CD14-positive monocyte (primary cell): ENCODE measurements at regions of chr17 and their contacts with region 1.

Region 1: DNA sequence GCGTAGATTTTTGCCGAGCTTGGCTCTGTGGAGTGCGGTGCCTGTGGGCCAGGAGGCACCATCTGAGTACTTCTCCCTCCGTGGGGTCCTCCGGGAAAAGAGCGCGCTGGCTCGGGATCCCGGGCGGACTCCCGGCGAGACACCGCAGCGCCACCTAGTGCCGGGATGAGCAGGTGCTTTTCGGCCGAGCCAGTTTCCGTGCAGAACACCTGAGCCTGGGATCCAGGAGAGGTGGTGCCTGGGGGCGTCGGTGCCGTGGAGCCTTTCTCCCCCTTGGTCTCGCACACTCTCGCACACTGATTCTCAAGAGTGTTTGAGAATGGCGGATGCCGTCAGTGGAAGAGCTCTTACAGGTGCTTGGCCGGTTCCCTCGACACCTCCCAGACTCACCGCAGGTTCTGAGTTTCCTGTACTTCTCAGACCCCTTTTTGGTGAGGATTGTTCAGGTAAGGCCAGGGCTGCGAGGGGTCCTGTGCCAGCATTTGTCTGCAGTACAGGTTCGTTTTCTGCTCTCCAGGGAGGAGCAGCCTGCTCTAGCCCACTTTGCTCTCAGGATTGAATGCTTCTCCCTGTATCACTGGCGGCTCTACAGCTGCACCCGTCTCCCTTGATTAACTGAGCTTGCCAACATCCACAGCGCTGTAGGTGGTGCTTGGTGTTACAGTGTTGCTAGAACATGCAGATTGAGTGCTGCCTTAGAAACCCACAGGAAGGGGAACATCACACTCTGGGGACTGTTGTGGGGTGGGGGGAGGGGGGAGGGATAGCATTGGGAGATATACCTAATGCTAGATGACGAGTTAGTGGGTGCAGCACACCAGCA is 23.3 kb downstream of the TBCD start:
- DNase-seq: peak in 2 of 3 donors; percentile 24 to 39
- H3K4me3 ChIP-seq: no peak overlapping the region
- H3K4me3 Mint-ChIP-seq: no peak overlapping the region
- H3K27ac ChIP-seq: no peak overlapping the region
- H3K27ac Mint-ChIP-seq: peak overlapping the region in 1 of 7 donors; percentile 25
- H3K4me1 ChIP-seq: peaks cover 0 to 5% of the 10 kb centered on the region in 2 donors
- H3K4me1 Mint-ChIP-seq: peaks cover 7% of the 10 kb centered on the region
- H3K27me3 ChIP-seq: no peaks in the 10 kb centered on the region
- H3K27me3 Mint-ChIP-seq: peaks cover 0 to 5% (median 0%) of the 10 kb centered on the region in 3 donors
- CTCF ChIP-seq: peak; percentile 89

Region 2: GRCh38 chr17:82351716-82352488 is 423.3 kb before region 1 on chr17:
- intact Hi-C with region 1: loop called in 1 of 2 experiments (anchors 10 kb)
- DNase-seq: peak; percentile 77 to 82 (median 80)
- H3K4me3 ChIP-seq: no peak overlapping the region
- H3K4me3 Mint-ChIP-seq: no peak overlapping the region
- H3K27ac ChIP-seq: no peak overlapping the region
- H3K27ac Mint-ChIP-seq: peak overlapping the region in 1 of 7 donors; percentile 48
- H3K4me1 ChIP-seq: peaks cover 1 to 3% of the 10 kb centered on the region in 2 donors
- H3K4me1 Mint-ChIP-seq: peaks cover 3% of the 10 kb centered on the region
- H3K27me3 ChIP-seq: peaks cover 0 to 2% of the 10 kb centered on the region in 2 donors
- H3K27me3 Mint-ChIP-seq: peaks cover 4 to 12% (median 6%) of the 10 kb centered on the region in 3 donors
- CTCF ChIP-seq: peak; percentile 94

Region 3: GRCh38 chr17:82668631-82669099 is 106.5 kb before region 1 on chr17:
- intact Hi-C with region 1: loop called in 1 of 2 experiments (anchors 5 kb)
- DNase-seq: peak; percentile 46 to 63 (median 59)
- H3K4me3 ChIP-seq: peak overlapping the region in 1 of 3 experiments; percentile 48
- H3K4me3 Mint-ChIP-seq: peak overlapping the region; percentile 62 to 85
- H3K27ac ChIP-seq: no peak overlapping the region
- H3K27ac Mint-ChIP-seq: no peak overlapping the region
- H3K4me1 ChIP-seq: peaks cover 3 to 8% of the 10 kb centered on the region in 2 donors
- H3K4me1 Mint-ChIP-seq: peaks cover 9% of the 10 kb centered on the region
- H3K27me3 ChIP-seq: no peaks in the 10 kb centered on the region
- H3K27me3 Mint-ChIP-seq: peaks cover 0 to 6% (median 0%) of the 10 kb centered on the region in 3 donors
- CTCF ChIP-seq: peak; percentile 70

Region 4: GRCh38 chr17:82791532-82791931 is 16.3 kb after region 1 on chr17:
- intact Hi-C with region 1: no loop called
- DNase-seq: no peak
- H3K4me3 ChIP-seq: no peak overlapping the region
- H3K4me3 Mint-ChIP-seq: no peak overlapping the region
- H3K27ac ChIP-seq: no peak overlapping the region
- H3K27ac Mint-ChIP-seq: peak overlapping the region in 1 of 7 donors; percentile 2
- H3K4me1 ChIP-seq: no peaks in the 10 kb centered on the region
- H3K4me1 Mint-ChIP-seq: no peaks in the 10 kb centered on the region
- H3K27me3 ChIP-seq: no peaks in the 10 kb centered on the region
- H3K27me3 Mint-ChIP-seq: peaks cover 0 to 3% (median 2%) of the 10 kb centered on the region in 3 donors
- CTCF ChIP-seq: no peak